ENCODE measurements at regions of chr12 and their contacts with region 1.

Region 1: GRCh38 chr12:13362260-13362841 is 165.8 kb downstream of the EMP1 start:
- H3K4me3 ChIP-seq: no peak overlapping the region
- H3K27ac ChIP-seq: no peak overlapping the region
- H3K4me1 ChIP-seq: no peaks in the 10 kb centered on the region
- CTCF ChIP-seq: peak; percentile 58; the same call in 1 of the 2 replicates

Region 2: DNA sequence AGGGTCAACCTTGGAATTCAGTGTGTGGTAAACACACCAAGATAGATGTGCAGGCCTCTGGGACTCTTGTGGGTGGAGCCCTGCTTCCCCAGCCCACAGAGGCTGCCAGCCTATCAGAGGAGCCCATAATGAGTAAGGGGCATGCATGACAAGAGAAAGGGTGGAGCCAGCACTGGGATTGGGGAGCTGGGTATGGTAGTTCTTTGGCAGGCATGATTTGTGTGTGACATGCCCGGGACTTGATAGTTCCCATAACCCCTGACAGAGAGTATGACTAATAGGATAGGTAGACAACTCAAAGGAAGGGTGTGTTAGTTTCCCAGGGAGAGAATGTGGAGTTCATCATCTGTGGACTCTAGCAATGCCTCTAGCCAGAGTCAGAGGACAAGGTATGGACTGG is 22.8 kb before region 1 on chr12:
- CTCF ChIA-PET with region 1: interaction called, 15 read pairs
- POLR2A ChIA-PET with region 1: no interaction called
- H3K4me3 ChIP-seq: no peak overlapping the region
- H3K27ac ChIP-seq: no peak overlapping the region
- H3K4me1 ChIP-seq: no peaks in the 10 kb centered on the region
- CTCF ChIP-seq: no peak

Region 3: DNA sequence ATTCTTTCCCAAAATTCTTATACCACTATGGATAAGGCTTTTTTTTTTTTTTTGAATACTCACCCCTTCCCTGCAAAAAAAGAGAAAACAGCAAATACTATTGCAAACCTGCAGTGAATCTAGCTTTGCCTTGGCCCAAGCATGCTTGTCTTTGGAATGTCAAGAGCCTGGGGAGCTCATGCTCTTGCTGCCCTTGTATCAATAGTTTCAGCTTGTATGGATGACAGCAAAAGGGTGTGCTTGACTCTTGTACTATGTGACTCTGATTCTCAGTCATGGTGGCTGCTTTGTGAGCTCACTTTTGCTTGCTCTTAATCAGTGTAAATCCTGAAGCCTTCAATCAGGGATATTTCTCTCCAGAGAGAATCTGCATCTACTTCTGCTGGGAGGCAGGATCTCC is 16.6 kb before region 1 on chr12:
- CTCF ChIA-PET with region 1: interaction called, 15 read pairs
- POLR2A ChIA-PET with region 1: no interaction called
- H3K4me3 ChIP-seq: no peak overlapping the region
- H3K27ac ChIP-seq: no peak overlapping the region
- H3K4me1 ChIP-seq: no peaks in the 10 kb centered on the region
- CTCF ChIP-seq: no peak

Region 4: GRCh38 chr12:13374793-13375192 is 12.4 kb after region 1 on chr12:
- CTCF ChIA-PET with region 1: interaction called, 43 read pairs
- POLR2A ChIA-PET with region 1: no interaction called
- H3K4me3 ChIP-seq: no peak overlapping the region
- H3K27ac ChIP-seq: no peak overlapping the region
- H3K4me1 ChIP-seq: no peaks in the 10 kb centered on the region
- CTCF ChIP-seq: no peak

Region 5: GRCh38 chr12:13383379-13383778 is 21.0 kb after region 1 on chr12:
- CTCF ChIA-PET with region 1: interaction called, 12 read pairs
- POLR2A ChIA-PET with region 1: no interaction called
- H3K4me3 ChIP-seq: no peak overlapping the region
- H3K27ac ChIP-seq: no peak overlapping the region
- H3K4me1 ChIP-seq: no peaks in the 10 kb centered on the region
- CTCF ChIP-seq: no peak

Measured in HEK293 (cell line).